Heart right ventricle (tissue), 16 donors: ENCODE measurements at regions of chr5 and their contacts with region 1.

Region 1: DNA sequence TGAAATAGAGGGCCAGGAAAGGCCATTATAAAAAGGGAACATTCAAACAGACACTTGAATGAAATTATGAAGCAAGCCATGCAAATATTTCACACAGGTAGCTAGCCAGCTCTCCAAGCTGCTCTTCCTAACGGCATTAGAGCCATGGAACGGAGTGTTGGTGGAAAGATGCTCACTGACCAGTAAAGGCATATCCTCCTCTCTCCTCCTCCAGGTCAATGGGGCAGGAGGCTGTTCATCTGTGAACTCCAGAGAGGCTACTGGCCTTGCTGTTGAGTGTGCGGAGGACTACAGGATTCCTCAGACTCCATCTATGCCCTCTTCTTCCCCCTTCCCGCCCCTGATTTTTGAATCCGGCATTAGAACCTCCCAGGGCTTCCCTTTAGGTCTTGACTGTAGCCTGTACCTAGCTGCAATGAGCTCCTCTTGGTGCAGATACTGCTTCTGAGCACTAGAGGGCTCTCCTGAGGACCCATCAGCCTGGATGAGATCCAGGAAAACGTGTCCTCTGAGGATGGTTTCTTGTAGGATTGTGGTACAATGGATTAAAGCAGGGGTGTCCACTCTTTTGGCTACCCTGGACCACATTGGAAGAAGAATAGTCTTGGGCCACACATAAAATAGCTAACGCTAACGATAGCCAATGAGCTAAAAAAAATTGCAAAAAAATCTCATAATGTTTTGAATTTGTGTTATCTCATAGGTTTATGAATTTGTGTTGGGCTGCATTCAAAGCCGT is 162.2 kb downstream of the SREK1 start:
- DNase-seq: peak in 1 of 2 donors; percentile 46
- ATAC-seq: peak in 7 of 8 donors; percentile 70 to 89 (median 79)
- H3K4me3 ChIP-seq: no peak overlapping the region
- H3K27ac ChIP-seq: peak overlapping the region in 3 of 10 donors; percentile 9 to 60 (median 22)
- H3K4me1 ChIP-seq: peaks cover 0 to 32% (median 23%) of the 10 kb centered on the region in 9 donors
- H3K27me3 ChIP-seq: peaks cover 0 to 3% (median 0%) of the 10 kb centered on the region in 7 donors
- CTCF ChIP-seq: peak; percentile 65 to 88 (median 79)

Region 2: GRCh38 chr5:66498791-66499207 is 192.5 kb after region 1 on chr5:
- intact Hi-C with region 1: loop called in 5 of 10 experiments (anchors 2 to 10 kb)
- DNase-seq: peak in 1 of 2 donors; percentile 34
- ATAC-seq: peak; percentile 42 to 93 (median 84)
- H3K4me3 ChIP-seq: no peak overlapping the region
- H3K27ac ChIP-seq: no peak overlapping the region
- H3K4me1 ChIP-seq: peaks cover 0 to 7% (median 0%) of the 10 kb centered on the region in 9 donors
- H3K27me3 ChIP-seq: no peaks in the 10 kb centered on the region
- CTCF ChIP-seq: peak in 8 of 9 donors; percentile 16 to 58 (median 38)

Region 3: DNA sequence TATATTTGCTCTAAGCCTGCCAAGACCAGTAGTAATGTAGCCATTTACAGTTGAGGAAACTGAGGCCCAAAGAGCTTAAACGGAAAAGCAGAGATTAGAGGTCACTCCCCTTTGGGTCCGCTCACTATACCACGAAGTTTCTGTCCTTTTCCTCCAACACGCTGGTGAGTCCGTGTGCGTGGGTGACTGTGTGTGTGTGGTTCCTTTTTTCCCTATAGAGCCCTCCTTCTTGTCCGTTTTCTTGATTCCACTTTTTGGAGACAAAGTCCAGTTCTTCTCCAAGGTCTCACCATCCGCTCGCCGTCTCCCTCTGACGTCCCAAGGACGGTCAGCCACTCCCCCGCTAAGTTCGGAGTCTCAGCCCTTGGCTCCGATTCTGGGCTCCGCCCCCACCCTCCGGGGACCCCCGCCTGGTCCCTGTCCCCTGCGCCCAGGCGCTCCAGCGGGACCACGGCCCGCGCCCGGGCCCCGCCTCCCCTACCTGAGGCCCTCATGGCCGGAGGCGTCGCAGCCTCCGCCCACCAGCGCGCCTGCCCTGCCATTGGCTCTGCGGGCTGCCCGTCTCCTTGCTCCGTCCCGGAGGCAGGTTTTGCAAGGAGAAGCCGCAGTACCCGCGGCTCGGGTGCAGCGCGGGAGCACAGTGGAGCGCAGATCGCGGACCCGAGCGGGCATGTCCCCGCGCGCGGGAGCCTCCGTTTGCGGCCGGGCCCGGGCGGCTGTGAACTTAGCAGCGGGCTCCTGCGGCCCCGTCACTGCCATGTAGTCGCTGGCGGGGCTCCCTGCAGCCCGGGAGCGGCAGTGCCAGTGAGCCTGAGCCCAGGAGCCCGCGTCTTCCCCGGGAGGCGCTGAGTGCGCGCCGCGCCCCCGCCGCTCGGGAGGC is 289.7 kb after region 1 on chr5 and contains the start of gene MAST4:
- intact Hi-C with region 1: loop called in 4 of 10 experiments (anchors 2 to 10 kb)
- DNase-seq: peak; percentile 92 to 93
- ATAC-seq: peak; percentile 93 to 96 (median 95)
- H3K4me3 ChIP-seq: peak within 1 kb of the TSS; percentile 63 to 90 (median 75)
- H3K27ac ChIP-seq: peak within 1 kb of the TSS; percentile 44 to 83 (median 80)
- H3K4me1 ChIP-seq: peaks cover 0 to 52% (median 27%) of the 10 kb centered on the region in 9 donors
- H3K27me3 ChIP-seq: peaks cover 0 to 82% (median 0%) of the 10 kb centered on the region in 7 donors
- CTCF ChIP-seq: no peak
- total RNA-seq, gene MAST4: 58.7 to 93.3 (median 78.4) TPM

Region 4: GRCh38 chr5:66701244-66701643 is 395.0 kb after region 1 on chr5:
- intact Hi-C with region 1: no loop called
- DNase-seq: no peak
- ATAC-seq: no peak
- H3K4me3 ChIP-seq: no peak overlapping the region
- H3K27ac ChIP-seq: no peak overlapping the region
- H3K4me1 ChIP-seq: peaks cover 0 to 26% (median 8%) of the 10 kb centered on the region in 9 donors
- H3K27me3 ChIP-seq: no peaks in the 10 kb centered on the region
- CTCF ChIP-seq: no peak

Region 5: GRCh38 chr5:66757188-66757833 is 451.0 kb after region 1 on chr5:
- intact Hi-C with region 1: loop called (anchors 1 to 5 kb)
- DNase-seq: peak in 1 of 2 donors; percentile 54
- ATAC-seq: peak in 6 of 8 donors; percentile 44 to 79 (median 73)
- H3K4me3 ChIP-seq: no peak overlapping the region
- H3K27ac ChIP-seq: no peak overlapping the region
- H3K4me1 ChIP-seq: peaks cover 0 to 24% (median 10%) of the 10 kb centered on the region in 9 donors
- H3K27me3 ChIP-seq: no peaks in the 10 kb centered on the region
- CTCF ChIP-seq: peak in 8 of 9 donors; percentile 26 to 70 (median 59)

Region 6: GRCh38 chr5:66769839-66770617 is 463.8 kb after region 1 on chr5:
- intact Hi-C with region 1: loop called in 1 of 10 experiments (anchors 5 kb)
- DNase-seq: peak in 1 of 2 donors; percentile 24
- ATAC-seq: peak in 7 of 8 donors; percentile 55 to 88 (median 70)
- H3K4me3 ChIP-seq: no peak overlapping the region
- H3K27ac ChIP-seq: peak overlapping the region in 1 of 10 donors; percentile 23
- H3K4me1 ChIP-seq: peaks cover 0 to 41% (median 13%) of the 10 kb centered on the region in 9 donors
- H3K27me3 ChIP-seq: no peaks in the 10 kb centered on the region
- CTCF ChIP-seq: peak in 7 of 9 donors; percentile 31 to 65 (median 49)

Region 7: DNA sequence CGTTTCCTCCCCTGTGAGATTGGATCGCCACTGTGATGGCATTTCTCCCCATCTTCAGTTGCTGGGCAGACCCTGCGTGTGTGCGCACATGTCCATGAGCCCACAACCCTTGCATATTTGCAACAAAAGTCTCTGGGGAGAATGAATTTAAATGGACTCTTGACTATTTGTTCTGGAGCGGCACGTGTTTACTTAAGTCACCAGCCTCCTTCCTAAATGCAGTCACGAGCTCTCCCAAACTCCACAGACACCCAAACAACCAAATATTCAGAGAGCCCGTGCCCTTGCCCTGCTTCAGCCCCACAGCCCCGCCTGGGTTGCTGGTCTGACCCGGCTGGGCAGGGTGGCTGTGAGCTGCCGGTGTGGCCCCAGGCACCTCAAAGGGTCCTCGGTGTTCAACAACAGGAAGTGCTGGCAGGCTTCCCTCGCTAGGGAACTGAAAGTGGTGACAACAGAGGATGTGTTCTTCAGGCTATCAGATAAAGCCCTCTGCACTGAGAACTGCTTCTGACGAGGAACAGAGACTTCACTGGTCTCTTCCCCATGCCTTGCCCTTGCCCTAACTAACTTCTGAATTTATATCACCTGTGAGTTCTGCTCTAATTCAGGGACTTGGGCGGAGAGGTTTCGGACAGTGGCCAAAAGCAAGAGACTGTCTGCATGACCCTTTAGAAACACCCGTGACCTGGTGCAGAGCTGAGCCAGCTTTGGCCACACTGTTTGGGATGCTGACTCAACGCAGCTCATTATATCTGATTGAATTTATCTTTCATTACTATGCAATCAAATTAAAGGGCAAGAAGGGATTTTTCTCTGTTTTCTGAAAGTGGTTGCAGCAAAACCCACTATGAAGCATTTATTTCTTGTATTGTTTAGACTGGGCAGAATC is 909.6 kb after region 1 on chr5:
- intact Hi-C with region 1: loop called in 1 of 10 experiments (anchors 10 kb)
- DNase-seq: peak; percentile 89
- ATAC-seq: peak; percentile 85 to 96 (median 93)
- H3K4me3 ChIP-seq: peak overlapping the region in 7 of 10 donors; percentile 8 to 39 (median 32)
- H3K27ac ChIP-seq: peak overlapping the region in 9 of 10 donors; percentile 22 to 92 (median 69)
- H3K4me1 ChIP-seq: peaks cover 9 to 32% (median 23%) of the 10 kb centered on the region in 9 donors
- H3K27me3 ChIP-seq: no peaks in the 10 kb centered on the region
- CTCF ChIP-seq: no peak